CD4-positive, alpha-beta T cell (primary cell): ENCODE measurements at regions of chr9 and their contacts with region 1.

Region 1: GRCh38 chr9:33473643-33474352 is at the start of gene NOL6:
- DNase-seq: peak; percentile 96 to 99 (median 97)
- ATAC-seq: peak; percentile 99
- H3K4me3 ChIP-seq: peak within 1 kb of the TSS; percentile 92
- H3K4me3 Mint-ChIP-seq: peak within 1 kb of the TSS; percentile 99
- H3K27ac ChIP-seq: peak within 1 kb of the TSS; percentile 58 to 64
- H3K27ac Mint-ChIP-seq: peak within 1 kb of the TSS; percentile 89
- H3K4me1 ChIP-seq: peaks cover 25% of the 10 kb centered on the region
- H3K4me1 Mint-ChIP-seq: peaks cover 33% of the 10 kb centered on the region
- H3K27me3 ChIP-seq: no peaks in the 10 kb centered on the region
- H3K27me3 Mint-ChIP-seq: no peaks in the 10 kb centered on the region
- CTCF ChIP-seq: no peak
- total RNA-seq, gene NOL6: 30.5 to 30.6 TPM

Region 2: GRCh38 chr9:33374634-33375213 is 99.1 kb before region 1 on chr9:
- CTCF ChIA-PET with region 1: interaction called, 37 read pairs
- POLR2A ChIA-PET with region 1: interaction called, 9 read pairs
- intact Hi-C with region 1: no loop called
- DNase-seq: peak; percentile 48 to 82 (median 62)
- ATAC-seq: peak; percentile 96
- H3K4me3 ChIP-seq: peak overlapping the region; percentile 17
- H3K4me3 Mint-ChIP-seq: peak overlapping the region; percentile 56
- H3K27ac ChIP-seq: no peak overlapping the region
- H3K27ac Mint-ChIP-seq: peak overlapping the region; percentile 45
- H3K4me1 ChIP-seq: peaks cover 8% of the 10 kb centered on the region
- H3K4me1 Mint-ChIP-seq: peaks cover 16% of the 10 kb centered on the region
- H3K27me3 ChIP-seq: no peaks in the 10 kb centered on the region
- H3K27me3 Mint-ChIP-seq: no peaks in the 10 kb centered on the region
- CTCF ChIP-seq: peak; percentile 86

Region 3: GRCh38 chr9:33415501-33416038 is 58.2 kb before region 1 on chr9:
- CTCF ChIA-PET with region 1: interaction called, 12 read pairs
- POLR2A ChIA-PET with region 1: interaction called, 43 read pairs
- intact Hi-C with region 1: no loop called
- DNase-seq: peak; percentile 91 to 99 (median 95)
- ATAC-seq: peak; percentile 88
- H3K4me3 ChIP-seq: peak overlapping the region; percentile 25
- H3K4me3 Mint-ChIP-seq: peak overlapping the region; percentile 79
- H3K27ac ChIP-seq: peak overlapping the region; percentile 54 to 58
- H3K27ac Mint-ChIP-seq: peak overlapping the region; percentile 93
- H3K4me1 ChIP-seq: peaks cover 64% of the 10 kb centered on the region
- H3K4me1 Mint-ChIP-seq: peaks cover 45% of the 10 kb centered on the region
- H3K27me3 ChIP-seq: no peaks in the 10 kb centered on the region
- H3K27me3 Mint-ChIP-seq: no peaks in the 10 kb centered on the region
- CTCF ChIP-seq: peak; percentile 83

Region 4: DNA sequence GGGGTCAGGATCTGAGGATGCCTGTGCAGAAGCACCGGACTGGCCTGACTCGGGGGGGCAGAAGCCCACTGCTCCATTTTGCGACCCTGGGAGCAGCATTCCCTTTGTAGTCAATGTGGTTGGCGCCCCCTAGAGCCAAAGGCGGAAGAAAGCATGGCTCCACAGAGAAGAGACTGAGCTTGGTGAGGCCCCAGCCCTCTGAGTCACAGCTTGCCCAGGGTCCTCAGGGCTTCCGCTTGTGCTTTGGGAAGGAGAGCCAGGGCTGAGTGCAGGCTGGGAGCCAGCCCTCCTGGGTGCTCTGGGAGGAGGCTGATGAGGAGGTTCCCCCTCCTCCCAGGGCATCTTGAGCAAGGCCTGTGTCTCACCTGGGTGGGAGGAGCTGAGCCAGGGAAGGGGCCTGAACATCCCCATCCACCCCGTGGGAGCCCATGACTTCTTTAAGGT is 20.9 kb before region 1 on chr9:
- CTCF ChIA-PET with region 1: interaction called, 5 read pairs
- POLR2A ChIA-PET with region 1: interaction called, 67 read pairs
- intact Hi-C with region 1: no loop called
- DNase-seq: peak in 11 of 14 experiments; percentile 27 to 77 (median 52)
- ATAC-seq: peak; percentile 50
- H3K4me3 ChIP-seq: no peak overlapping the region
- H3K4me3 Mint-ChIP-seq: peak overlapping the region; percentile 54
- H3K27ac ChIP-seq: peak overlapping the region; percentile 4 to 21
- H3K27ac Mint-ChIP-seq: peak overlapping the region; percentile 90
- H3K4me1 ChIP-seq: peaks cover 72% of the 10 kb centered on the region
- H3K4me1 Mint-ChIP-seq: peaks cover 60% of the 10 kb centered on the region
- H3K27me3 ChIP-seq: no peaks in the 10 kb centered on the region
- H3K27me3 Mint-ChIP-seq: no peaks in the 10 kb centered on the region
- CTCF ChIP-seq: peak; percentile 70

Region 5: DNA sequence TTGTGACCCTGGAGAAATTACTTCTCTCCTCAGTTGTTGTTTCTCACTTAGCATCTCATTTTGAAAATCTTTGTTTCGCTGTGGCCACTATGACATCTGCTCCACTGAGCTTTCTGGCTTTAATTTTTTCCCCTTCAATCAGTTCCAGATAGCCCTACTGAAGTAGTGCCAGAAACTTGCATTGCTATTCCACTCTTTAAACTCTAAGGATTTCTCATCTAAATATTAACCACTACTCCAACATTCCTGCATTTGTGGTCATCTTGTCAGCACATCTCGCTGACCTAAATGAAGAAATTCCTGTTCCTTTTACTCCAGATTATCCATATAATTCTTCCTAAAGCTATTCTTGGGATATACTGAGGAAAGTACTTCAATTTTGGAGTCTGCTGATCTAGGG is 15.3 kb after region 1 on chr9:
- CTCF ChIA-PET with region 1: no interaction called
- POLR2A ChIA-PET with region 1: no interaction called
- intact Hi-C with region 1: no loop called
- DNase-seq: no peak
- ATAC-seq: no peak
- H3K4me3 ChIP-seq: no peak overlapping the region
- H3K4me3 Mint-ChIP-seq: no peak overlapping the region
- H3K27ac ChIP-seq: no peak overlapping the region
- H3K27ac Mint-ChIP-seq: no peak overlapping the region
- H3K4me1 ChIP-seq: no peaks in the 10 kb centered on the region
- H3K4me1 Mint-ChIP-seq: no peaks in the 10 kb centered on the region
- H3K27me3 ChIP-seq: no peaks in the 10 kb centered on the region
- H3K27me3 Mint-ChIP-seq: peaks cover 6% of the 10 kb centered on the region
- CTCF ChIP-seq: no peak